Esophagus muscularis mucosa (tissue), 4 donors: ENCODE measurements at regions of chr13 and their contacts with region 1.

Region 1: DNA sequence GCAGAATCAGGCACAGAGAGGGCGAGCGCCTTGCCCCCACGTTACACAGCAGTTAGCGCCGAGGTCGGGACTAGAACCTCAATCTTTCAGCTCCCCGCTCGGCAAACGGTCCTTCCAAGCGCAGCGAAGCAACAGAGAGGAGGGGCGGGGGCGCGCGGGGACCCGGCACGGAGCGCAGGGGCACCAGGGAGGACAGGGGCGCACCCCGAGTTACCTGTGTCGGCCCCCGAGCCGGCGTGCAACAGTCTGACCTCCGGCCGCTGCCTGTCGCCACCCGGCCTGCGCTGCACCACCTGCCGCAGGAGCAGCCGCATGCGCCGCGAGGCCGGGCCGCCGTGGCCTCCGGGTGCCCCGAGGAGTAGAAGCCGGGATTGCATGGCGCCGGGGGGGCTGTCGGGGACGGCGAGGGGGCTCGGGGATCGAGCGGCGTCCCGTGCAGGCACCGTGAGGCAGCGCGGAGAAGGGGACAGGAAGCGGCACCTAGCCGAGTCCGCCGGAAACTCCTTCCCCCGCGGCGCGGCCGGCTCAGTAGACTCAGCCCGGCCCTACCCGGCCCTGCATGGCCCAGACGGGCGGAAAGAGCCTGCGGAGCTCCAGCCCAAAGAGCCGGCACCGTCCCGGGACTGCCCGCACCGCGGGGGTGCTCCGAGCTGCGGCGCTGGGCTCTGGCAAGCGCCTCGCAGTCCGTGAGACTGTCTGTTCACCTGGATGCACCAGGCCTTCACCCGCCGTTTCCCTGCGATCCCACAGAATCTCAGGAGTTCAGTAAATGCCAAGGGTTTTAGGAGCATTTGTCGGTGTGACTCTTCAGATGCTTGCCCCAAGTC is at the start of gene VWA8:
- DNase-seq: peak; percentile 94
- H3K4me3 ChIP-seq: peak within 1 kb of the TSS; percentile 78 to 96 (median 93)
- H3K27ac ChIP-seq: peak within 1 kb of the TSS; percentile 82 to 91 (median 89)
- H3K4me1 ChIP-seq: peaks cover 16 to 34% (median 28%) of the 10 kb centered on the region in 4 donors
- H3K27me3 ChIP-seq: no peaks in the 10 kb centered on the region
- CTCF ChIP-seq: no peak
- EP300 ChIP-seq: no peak
- POLR2A ChIP-seq: no peak
- total RNA-seq, gene VWA8: 19.5 to 26.2 (median 21.6) TPM

Region 2: GRCh38 chr13:42039946-42040729 is 79.3 kb after region 1 on chr13:
- intact Hi-C with region 1: loop called (anchors 5 kb)
- DNase-seq: peak; percentile 98
- H3K4me3 ChIP-seq: peak overlapping the region; percentile 78 to 90 (median 88)
- H3K27ac ChIP-seq: peak overlapping the region; percentile 96 to 99 (median 98)
- H3K4me1 ChIP-seq: peaks cover 9 to 24% (median 23%) of the 10 kb centered on the region in 4 donors
- H3K27me3 ChIP-seq: no peaks in the 10 kb centered on the region
- CTCF ChIP-seq: peak in 1 of 3 experiments; percentile 21
- EP300 ChIP-seq: no peak
- POLR2A ChIP-seq: peak; percentile 63